Ascending aorta (tissue), 2 donors: ENCODE measurements at regions of chr10 and their contacts with region 1.

Region 1: GRCh38 chr10:116385994-116386809 is 41.4 kb upstream of the PNLIPRP3 start:
- DNase-seq: no peak
- H3K4me3 ChIP-seq: no peak overlapping the region
- H3K27ac ChIP-seq: no peak overlapping the region
- H3K4me1 ChIP-seq: no peaks in the 10 kb centered on the region
- H3K27me3 ChIP-seq: no peaks in the 10 kb centered on the region
- CTCF ChIP-seq: peak; percentile 7 to 55 (median 39)

Region 2: GRCh38 chr10:115141254-115141653 is 1244.9 kb before region 1 on chr10:
- intact Hi-C with region 1: loop called (anchors 10 kb)
- DNase-seq: no peak
- H3K4me3 ChIP-seq: no peak overlapping the region
- H3K27ac ChIP-seq: no peak overlapping the region
- H3K4me1 ChIP-seq: no peaks in the 10 kb centered on the region
- H3K27me3 ChIP-seq: no peaks in the 10 kb centered on the region
- CTCF ChIP-seq: peak in 2 of 3 experiments; percentile 29 to 49

Region 3: DNA sequence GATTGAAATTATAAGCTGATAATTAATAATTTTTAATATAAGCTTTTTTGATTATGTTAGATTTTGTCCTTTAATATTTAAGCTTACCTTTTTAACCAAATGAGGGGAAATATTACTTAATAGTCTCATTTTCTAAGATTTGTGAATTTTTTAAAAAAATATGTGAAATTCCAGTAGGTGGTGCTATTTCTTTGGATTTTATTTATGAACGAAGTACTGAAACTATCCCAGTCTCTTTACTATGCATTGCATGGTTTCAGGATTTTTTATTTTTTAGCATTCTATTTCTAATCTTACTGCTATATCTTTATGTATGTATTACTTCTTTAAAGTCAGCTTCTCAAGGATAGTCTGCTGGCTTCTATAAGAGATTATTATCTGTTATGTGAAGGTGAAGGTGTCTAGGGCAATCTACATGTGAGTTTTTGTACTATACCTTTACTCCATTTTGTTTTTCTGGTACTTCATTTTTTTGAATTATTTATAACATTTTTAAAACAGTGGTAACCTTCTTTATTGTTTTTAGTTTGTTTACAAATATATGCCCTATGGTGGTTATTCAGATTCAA is 1214.7 kb before region 1 on chr10:
- intact Hi-C with region 1: loop called (anchors 10 kb)
- DNase-seq: no peak
- H3K4me3 ChIP-seq: no peak overlapping the region
- H3K27ac ChIP-seq: no peak overlapping the region
- H3K4me1 ChIP-seq: no peaks in the 10 kb centered on the region
- H3K27me3 ChIP-seq: no peaks in the 10 kb centered on the region
- CTCF ChIP-seq: peak in 2 of 3 experiments; percentile 12 to 43

Region 4: DNA sequence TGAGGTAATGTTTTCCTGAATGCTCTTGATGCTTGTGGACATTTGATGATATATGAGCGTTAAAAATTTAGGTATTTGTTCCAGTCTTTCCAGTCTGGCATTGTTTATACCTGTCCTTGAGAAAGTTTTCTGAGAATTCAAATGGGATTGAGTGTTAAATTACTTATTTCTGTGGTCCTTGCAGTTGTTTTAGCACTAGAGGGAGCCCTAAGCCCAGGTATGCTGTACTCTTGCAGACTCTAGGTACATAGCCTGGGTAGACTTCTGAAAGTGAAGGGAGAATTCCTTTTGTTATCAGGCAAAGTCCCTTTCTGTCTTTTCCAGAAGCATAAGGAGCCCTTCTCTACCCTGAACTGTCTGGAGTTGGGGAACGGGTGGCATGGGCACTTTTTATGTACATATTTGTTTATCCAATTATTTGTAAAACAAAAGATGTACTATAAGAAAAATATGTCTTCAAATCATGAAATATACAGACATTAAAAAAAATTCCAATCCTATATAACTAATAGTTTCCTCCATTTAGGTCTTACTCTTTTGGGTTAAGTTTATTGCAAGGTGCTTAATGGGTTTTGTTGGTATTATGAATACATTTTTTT is 1030.9 kb before region 1 on chr10:
- intact Hi-C with region 1: loop called (anchors 2 kb)
- DNase-seq: no peak
- H3K4me3 ChIP-seq: no peak overlapping the region
- H3K27ac ChIP-seq: no peak overlapping the region
- H3K4me1 ChIP-seq: no peaks in the 10 kb centered on the region
- H3K27me3 ChIP-seq: no peaks in the 10 kb centered on the region
- CTCF ChIP-seq: peak; percentile 29 to 64 (median 47)

Region 5: DNA sequence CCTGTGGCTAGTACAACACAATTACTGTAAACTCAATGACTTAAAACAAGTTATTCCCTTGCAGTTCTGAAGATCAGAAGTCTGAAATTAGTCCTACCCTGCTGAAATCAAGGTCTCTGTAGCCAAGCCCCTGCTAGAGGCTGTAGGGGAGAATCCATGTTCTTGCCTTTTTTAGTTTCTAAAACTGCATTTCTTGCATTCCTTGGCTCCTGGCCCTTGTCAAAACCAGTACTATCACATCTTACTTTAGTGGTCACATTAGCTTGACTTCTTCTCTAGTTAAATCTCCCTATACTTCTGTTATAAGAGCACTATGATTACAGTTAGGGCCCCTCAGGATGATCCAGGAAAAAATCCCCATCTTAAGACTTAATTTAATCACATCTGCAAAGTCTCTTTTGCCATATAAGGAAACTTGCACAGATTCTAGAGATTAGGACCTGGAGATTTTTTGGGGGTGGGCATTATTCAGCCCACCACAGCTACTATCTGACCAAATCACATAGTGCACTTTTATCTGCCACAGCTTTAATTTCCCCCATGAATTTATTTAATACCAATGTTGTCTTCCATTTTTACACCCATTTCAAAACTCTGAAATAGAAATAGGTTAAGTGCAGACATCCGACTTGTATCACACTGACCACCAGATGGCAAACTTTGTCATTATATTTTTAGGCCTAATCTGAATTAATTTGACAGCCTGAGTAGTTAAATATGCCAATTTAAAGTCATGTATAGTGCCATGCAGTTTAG is 680.0 kb before region 1 on chr10:
- intact Hi-C with region 1: loop called (anchors 10 kb)
- DNase-seq: no peak
- H3K4me3 ChIP-seq: no peak overlapping the region
- H3K27ac ChIP-seq: no peak overlapping the region
- H3K4me1 ChIP-seq: no peaks in the 10 kb centered on the region
- H3K27me3 ChIP-seq: no peaks in the 10 kb centered on the region
- CTCF ChIP-seq: peak; percentile 29 to 62 (median 44)

Region 6: DNA sequence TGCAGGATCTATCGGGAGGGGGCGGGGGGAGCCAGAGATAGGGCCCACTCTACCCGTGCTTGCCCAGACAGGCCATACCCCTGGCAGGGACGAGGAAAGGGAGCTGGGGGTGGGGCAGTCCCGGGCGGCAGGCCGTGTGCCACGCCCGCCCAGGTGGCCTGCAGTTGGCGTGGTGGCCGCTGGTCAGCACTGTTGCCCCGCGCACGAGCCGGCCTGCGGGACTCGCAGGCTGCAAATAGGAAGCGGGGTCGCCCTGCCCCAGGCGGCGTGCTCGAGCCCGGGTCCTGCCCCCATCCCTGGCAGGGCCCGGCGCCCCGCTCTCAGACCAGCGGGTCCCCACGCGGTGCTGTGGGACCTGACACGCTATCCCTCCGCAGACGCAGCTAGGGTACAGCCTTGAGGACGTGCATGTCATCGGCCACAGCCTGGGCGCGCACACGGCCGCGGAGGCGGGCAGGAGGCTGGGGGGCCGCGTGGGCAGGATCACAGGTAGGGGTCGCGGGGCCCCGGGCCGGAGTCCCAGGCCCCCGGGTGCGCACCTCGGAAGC is 241.3 kb after region 1 on chr10:
- intact Hi-C with region 1: no loop called
- DNase-seq: no peak
- H3K4me3 ChIP-seq: peak overlapping the region in 1 of 2 donors; percentile 13
- H3K27ac ChIP-seq: no peak overlapping the region
- H3K4me1 ChIP-seq: no peaks in the 10 kb centered on the region
- H3K27me3 ChIP-seq: no peaks in the 10 kb centered on the region
- CTCF ChIP-seq: peak in 1 of 3 experiments; percentile 6